Brain microvascular endothelial cell (primary cell): ENCODE measurements at regions of chr14 and their contacts with region 1.

Region 1: DNA sequence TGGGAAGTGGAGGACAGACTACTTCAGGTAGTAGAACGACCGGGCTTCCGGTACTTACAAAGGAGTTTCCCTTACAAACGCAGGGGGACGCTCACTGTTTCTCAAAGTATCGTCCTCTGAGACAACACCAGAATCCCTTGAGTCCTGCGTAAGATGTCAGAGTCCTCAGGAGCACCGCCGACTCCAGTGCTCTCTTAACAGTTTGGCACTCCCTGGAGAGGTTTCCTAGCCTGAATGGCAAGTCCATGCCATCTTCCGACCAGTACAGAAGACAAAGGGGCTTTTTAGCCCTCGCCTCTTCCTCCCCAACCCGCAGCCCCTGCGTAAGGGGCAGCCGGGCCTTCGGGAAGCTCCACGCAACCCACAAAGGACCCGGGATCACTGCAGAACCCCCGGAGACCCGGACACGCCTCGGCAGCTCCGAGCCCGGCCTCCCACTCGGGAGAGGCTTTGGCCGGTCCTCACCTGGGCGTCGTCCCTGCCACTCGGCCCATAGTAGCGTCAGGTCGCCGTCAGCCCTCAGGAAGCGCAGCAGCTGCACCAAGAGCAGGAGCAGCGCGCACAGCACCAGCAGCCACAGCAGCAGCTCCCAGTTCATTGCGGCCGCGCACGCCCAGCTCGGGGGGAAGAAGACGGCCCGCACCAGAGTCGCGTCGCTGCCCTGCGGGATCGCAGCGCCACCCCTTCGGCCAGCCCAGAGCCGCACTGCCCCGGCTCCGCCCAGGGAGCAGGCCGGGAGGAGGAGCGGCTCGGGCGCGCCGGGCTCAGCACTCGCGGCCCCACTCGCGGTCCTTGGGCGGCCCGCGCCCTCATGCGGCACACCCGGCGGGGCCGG is at the start of gene DHRS7:
- DNase-seq: peak; percentile 60
- H3K4me3 ChIP-seq: peak within 1 kb of the TSS; percentile 85
- H3K27ac ChIP-seq: peak within 1 kb of the TSS; percentile 15
- H3K27me3 ChIP-seq: no peaks in the 10 kb centered on the region
- CTCF ChIP-seq: peak; percentile 39

Region 2: DNA sequence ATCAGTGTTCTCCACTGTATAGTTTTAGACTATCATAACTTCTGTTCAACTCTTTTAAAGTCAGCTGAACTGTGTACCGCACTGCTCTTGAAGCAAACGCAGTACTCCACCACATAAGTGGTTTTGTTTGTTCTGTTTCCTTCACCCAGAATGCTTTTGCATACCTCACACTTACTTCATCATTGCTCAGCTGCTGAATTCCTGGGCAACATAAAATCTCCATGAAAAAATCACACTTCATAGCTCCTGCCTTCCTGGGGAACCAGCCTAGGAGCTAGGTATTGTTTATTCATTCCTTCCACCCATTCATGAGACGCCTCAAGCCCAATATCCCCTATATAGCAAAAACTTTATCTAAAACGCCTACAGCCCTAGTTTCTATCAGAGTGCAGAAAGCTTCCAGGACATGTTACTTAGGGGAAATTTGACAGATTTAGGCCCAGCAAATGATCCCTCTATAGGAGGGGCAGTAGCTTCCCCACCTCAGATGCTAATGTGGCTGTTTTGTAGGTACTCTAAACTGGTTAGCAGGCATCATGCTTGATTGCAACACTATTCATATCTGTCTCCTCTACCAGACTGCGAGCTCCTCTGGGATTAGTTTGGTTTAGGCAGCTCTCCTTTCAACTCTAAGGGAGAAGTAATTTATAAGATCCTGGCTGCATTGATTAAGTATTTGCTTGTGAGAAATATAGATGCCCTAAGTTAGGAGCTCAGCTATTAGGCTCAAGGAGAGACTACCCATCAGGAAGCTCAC is 200.5 kb before region 1 on chr14:
- in situ Hi-C with region 1: loop called (anchors 25 kb)
- DNase-seq: no peak
- H3K4me3 ChIP-seq: no peak overlapping the region
- H3K27ac ChIP-seq: no peak overlapping the region
- H3K27me3 ChIP-seq: no peaks in the 10 kb centered on the region
- CTCF ChIP-seq: no peak